A549 (cell line): ENCODE measurements at regions of chr1 and their contacts with region 1.

Region 1: GRCh38 chr1:202009326-202010179 is 834 bp upstream of the ELF3 start:
- DNase-seq: peak; percentile 91 to 92
- ATAC-seq: peak; percentile 58 to 67
- H3K4me3 ChIP-seq: peak overlapping the region; percentile 95
- H3K27ac ChIP-seq: peak overlapping the region; percentile 93 to 94
- H3K4me1 ChIP-seq: peaks cover 55% of the 10 kb centered on the region
- CTCF ChIP-seq: peak; percentile 95
- EP300 ChIP-seq: no peak
- POLR2A ChIP-seq: no peak
- RAD21 ChIP-seq: peak; percentile 96 to 97

Region 2: DNA sequence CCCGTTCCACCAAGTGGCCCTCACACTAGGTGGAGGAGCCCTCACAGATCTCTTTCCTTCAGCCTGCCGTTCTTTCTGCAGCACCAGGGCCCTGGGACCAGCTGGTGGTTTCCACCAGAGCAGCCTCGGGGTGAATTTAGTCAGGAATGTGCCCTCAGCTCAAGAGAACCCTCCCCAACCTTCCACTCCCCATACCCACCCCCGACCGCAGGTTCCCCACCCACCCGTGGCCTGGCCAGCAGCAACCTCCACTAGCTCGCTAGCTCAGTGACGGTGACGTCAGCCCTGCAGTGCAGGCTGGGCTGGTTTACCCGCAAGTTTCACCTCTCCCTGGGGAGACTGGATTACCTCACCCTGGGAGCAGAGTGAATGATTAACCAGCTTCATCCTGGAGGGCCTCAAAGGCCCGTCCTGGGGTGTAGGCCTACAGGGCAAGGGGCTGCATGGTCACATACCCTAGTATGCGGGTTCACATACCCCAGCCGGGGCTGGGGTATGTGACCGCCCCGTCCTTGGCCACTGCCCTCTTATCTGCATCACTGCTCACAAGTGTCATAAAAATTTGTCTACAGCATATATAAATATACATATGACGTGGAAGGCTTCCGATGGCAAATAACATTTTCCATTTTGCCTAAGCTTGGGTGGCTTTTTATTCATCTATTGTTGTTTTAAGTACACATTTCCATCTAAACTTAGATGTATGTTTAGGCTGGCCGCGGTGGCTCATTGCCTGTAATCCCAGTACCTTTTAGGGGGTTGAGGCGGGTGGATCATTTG is 25.3 kb after region 1 on chr1:
- CTCF ChIA-PET with region 1: interaction called, 8 read pairs
- POLR2A ChIA-PET with region 1: interaction called, 147 read pairs
- DNase-seq: peak; percentile 91 to 100
- ATAC-seq: peak; percentile 92 to 95
- H3K4me3 ChIP-seq: peak overlapping the region; percentile 17; the same call in 1 of the 3 replicates
- H3K27ac ChIP-seq: peak overlapping the region; percentile 97 to 99
- H3K4me1 ChIP-seq: peaks cover 52% of the 10 kb centered on the region
- CTCF ChIP-seq: no peak
- EP300 ChIP-seq: peak; percentile 96 to 98
- POLR2A ChIP-seq: no peak; the same call in 1 of the 2 replicates
- RAD21 ChIP-seq: peak; percentile 21 to 67; a peak in 3 of 5 replicates

Region 3: DNA sequence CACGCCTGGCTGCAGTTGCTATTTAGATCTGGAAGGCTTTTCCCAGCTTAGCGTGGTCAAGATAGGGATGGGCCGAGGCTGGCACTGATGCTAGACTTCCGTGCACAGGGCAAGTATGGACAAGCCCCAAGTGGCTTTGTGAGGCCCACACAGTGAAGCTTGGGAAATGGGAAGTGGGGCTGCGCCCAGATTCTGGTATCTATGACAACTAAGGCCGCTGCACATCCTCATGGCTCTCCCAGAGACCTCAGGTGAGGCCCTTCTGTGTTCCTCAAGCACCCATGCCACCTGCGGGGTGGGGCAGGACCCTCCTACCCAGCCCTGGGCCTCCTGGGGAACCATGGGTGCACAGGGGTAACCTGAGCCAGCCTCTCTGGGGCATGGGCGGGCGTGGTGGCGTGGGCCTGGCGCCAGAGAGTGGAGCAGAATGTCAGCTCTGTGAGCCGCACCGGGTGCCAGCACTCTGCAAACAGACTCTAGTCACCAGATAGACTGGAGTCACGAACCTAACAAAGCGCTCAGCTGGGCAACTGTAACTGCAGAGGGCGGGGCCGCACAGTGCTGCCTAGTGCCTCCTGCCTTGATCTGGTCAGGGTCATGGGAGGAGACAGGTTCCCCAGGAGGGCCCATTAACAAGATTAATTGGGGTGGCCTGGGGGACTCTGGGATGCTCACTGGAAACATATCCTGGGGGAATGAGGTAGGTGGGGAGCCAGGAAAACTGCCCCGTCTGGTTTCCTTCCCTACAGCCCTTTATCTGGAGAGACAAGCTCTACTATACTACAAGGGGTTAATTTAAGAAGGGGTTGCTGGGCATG is 47.3 kb after region 1 on chr1:
- CTCF ChIA-PET with region 1: interaction called, 26 read pairs
- POLR2A ChIA-PET with region 1: interaction called, 70 read pairs
- DNase-seq: peak; percentile 94 to 98
- ATAC-seq: peak; percentile 87 to 91
- H3K4me3 ChIP-seq: no peak overlapping the region
- H3K27ac ChIP-seq: peak overlapping the region; percentile 97 to 98
- H3K4me1 ChIP-seq: peaks cover 58% of the 10 kb centered on the region
- CTCF ChIP-seq: no peak
- EP300 ChIP-seq: peak; percentile 69 to 89; a peak in 4 of 5 replicates
- POLR2A ChIP-seq: no peak
- RAD21 ChIP-seq: peak in 1 of 2 experiments; percentile 29; a peak in 2 of 5 replicates

Region 4: GRCh38 chr1:202076050-202076511 is 66.5 kb after region 1 on chr1:
- CTCF ChIA-PET with region 1: interaction called, 7 read pairs
- POLR2A ChIA-PET with region 1: interaction called, 19 read pairs
- DNase-seq: no peak
- ATAC-seq: peak; percentile 33 to 53; a peak in 5 of 6 replicates
- H3K4me3 ChIP-seq: no peak overlapping the region
- H3K27ac ChIP-seq: peak overlapping the region; percentile 76 to 88
- H3K4me1 ChIP-seq: peaks cover 50% of the 10 kb centered on the region
- CTCF ChIP-seq: no peak
- EP300 ChIP-seq: no peak
- POLR2A ChIP-seq: no peak
- RAD21 ChIP-seq: no peak

Region 5: GRCh38 chr1:202090997-202091396 is 81.4 kb after region 1 on chr1:
- CTCF ChIA-PET with region 1: interaction called, 8 read pairs
- POLR2A ChIA-PET with region 1: interaction called, 15 read pairs
- DNase-seq: peak in 1 of 2 experiments; percentile 55
- ATAC-seq: peak in 1 of 2 experiments; percentile 34; a peak in 3 of 6 replicates
- H3K4me3 ChIP-seq: no peak overlapping the region
- H3K27ac ChIP-seq: peak overlapping the region; percentile 46 to 60; a peak in 4 of 6 replicates
- H3K4me1 ChIP-seq: peaks cover 35% of the 10 kb centered on the region
- CTCF ChIP-seq: no peak; the same call in 2 of the 3 replicates
- EP300 ChIP-seq: no peak
- POLR2A ChIP-seq: no peak
- RAD21 ChIP-seq: peak; percentile 40 to 50

Region 6: DNA sequence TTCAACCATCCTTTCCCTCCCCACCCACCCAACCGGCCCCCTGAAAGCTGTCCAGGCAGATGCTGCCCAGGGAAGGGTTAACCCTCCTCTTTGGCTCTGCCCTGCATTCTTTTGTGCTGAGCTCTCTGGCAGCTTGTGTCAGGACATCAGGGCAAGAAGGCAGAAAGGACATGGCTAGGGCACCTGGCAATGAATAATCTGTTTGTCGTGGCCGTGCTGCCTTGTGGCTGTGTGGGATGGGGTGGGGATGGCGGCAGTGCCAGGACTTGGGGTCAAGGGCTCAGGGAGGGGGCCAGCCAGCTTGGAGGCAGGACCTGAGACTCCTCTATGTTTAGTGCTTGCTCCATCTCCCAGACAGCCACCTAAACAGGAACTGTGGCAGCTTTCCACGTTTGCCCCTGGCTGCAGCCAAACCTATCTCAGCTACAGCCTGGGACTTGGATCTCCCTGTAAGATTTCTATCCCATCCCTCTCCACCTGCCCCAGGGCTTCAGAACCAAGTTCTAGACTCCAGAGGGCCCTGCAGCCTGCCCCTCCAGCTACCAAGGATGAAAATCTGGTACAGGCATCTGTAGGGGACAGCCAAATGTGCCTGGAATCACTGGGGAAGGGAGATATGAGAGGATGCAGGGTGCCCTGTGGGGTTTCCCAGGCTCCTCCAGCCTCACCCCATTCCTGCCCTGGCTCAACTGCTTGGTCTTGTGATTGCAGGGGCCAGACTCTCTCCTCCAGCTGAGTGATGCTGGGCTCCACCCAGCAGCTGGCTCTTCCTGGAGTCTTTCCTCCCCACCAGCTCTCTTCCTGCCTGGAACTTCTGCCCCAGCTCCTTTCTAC is 103.5 kb after region 1 on chr1:
- CTCF ChIA-PET with region 1: interaction called, 1,624 read pairs
- POLR2A ChIA-PET with region 1: interaction called, 93 read pairs
- DNase-seq: peak; percentile 62 to 85
- ATAC-seq: peak; percentile 76 to 80
- H3K4me3 ChIP-seq: no peak overlapping the region
- H3K27ac ChIP-seq: peak overlapping the region; percentile 88 to 94
- H3K4me1 ChIP-seq: peaks cover 73% of the 10 kb centered on the region
- CTCF ChIP-seq: no peak
- EP300 ChIP-seq: no peak; a peak in 1 of 5 replicates
- POLR2A ChIP-seq: no peak
- RAD21 ChIP-seq: peak; percentile 24 to 25; a peak in 3 of 5 replicates